ENCODE measurements at regions of chr20 and their contacts with region 1.

Region 1: DNA sequence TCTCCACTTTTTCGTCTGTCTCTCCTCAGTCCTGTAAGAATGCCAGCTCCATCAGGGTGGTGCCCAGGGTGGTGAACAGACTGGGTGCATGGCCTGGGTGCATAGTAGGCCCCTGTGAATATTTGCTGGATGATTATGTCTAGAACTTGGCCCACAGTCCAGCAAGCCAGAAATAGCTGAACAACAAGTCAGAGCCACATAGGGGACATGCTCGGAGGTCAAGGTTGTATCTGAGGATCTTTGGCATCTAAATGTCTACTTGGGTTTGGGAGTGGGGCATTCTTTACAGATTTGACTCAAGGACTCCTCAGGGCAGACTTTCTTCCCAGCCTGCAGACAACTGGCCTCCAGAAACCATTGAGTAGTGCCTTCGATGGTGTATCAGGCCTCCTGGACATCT is 18.1 kb upstream of the BPIFA3 start:
- DNase-seq: no peak
- ATAC-seq: no peak
- H3K4me3 ChIP-seq: no peak overlapping the region
- H3K27ac ChIP-seq: no peak overlapping the region
- H3K4me1 ChIP-seq: no peaks in the 10 kb centered on the region
- CTCF ChIP-seq: no peak
- EP300 ChIP-seq: no peak
- POLR2A ChIP-seq: no peak
- RAD21 ChIP-seq: no peak

Region 2: GRCh38 chr20:33076662-33077372 is 122.2 kb before region 1 on chr20:
- CTCF ChIA-PET with region 1: no interaction called
- POLR2A ChIA-PET with region 1: no interaction called
- DNase-seq: peak in 1 of 2 experiments; percentile 39
- ATAC-seq: peak in 1 of 2 experiments; percentile 61; a peak in 3 of 6 replicates
- H3K4me3 ChIP-seq: no peak overlapping the region
- H3K27ac ChIP-seq: no peak overlapping the region
- H3K4me1 ChIP-seq: peaks cover 5% of the 10 kb centered on the region; the same call in 2 of the 3 replicates
- CTCF ChIP-seq: no peak
- EP300 ChIP-seq: no peak
- POLR2A ChIP-seq: no peak
- RAD21 ChIP-seq: no peak

Region 3: GRCh38 chr20:33211817-33212424 is 12.9 kb after region 1 on chr20:
- CTCF ChIA-PET with region 1: interaction called, 16 read pairs
- POLR2A ChIA-PET with region 1: no interaction called
- DNase-seq: peak; percentile 83 to 84
- ATAC-seq: peak; percentile 91 to 98
- H3K4me3 ChIP-seq: no peak overlapping the region
- H3K27ac ChIP-seq: no peak overlapping the region
- H3K4me1 ChIP-seq: no peaks in the 10 kb centered on the region
- CTCF ChIP-seq: peak; percentile 55
- EP300 ChIP-seq: no peak
- POLR2A ChIP-seq: no peak
- RAD21 ChIP-seq: peak; percentile 64 to 72

Region 4: GRCh38 chr20:33697129-33697528 is 498.1 kb after region 1 on chr20:
- CTCF ChIA-PET with region 1: no interaction called
- POLR2A ChIA-PET with region 1: no interaction called
- DNase-seq: no peak
- ATAC-seq: no peak
- H3K4me3 ChIP-seq: no peak overlapping the region
- H3K27ac ChIP-seq: no peak overlapping the region
- H3K4me1 ChIP-seq: 0 out of 3 replicates have a peak, but pooled peaks cover 3% of the 10 kb centered on the region
- CTCF ChIP-seq: no peak
- EP300 ChIP-seq: no peak
- POLR2A ChIP-seq: no peak
- RAD21 ChIP-seq: no peak